SK-N-SH (cell line): ENCODE measurements at regions of chr1 and their contacts with region 1.

Region 1: GRCh38 chr1:21232044-21232443 is 55.3 kb upstream of the EIF4G3 start:
- DNase-seq: peak; percentile 81
- H3K4me3 ChIP-seq: no peak overlapping the region
- H3K27ac ChIP-seq: no peak overlapping the region
- H3K4me1 ChIP-seq: no peaks in the 10 kb centered on the region
- H3K27me3 ChIP-seq: no peaks in the 10 kb centered on the region
- CTCF ChIP-seq: peak; percentile 84
- EP300 ChIP-seq: no peak
- RAD21 ChIP-seq: peak; percentile 93

Region 2: DNA sequence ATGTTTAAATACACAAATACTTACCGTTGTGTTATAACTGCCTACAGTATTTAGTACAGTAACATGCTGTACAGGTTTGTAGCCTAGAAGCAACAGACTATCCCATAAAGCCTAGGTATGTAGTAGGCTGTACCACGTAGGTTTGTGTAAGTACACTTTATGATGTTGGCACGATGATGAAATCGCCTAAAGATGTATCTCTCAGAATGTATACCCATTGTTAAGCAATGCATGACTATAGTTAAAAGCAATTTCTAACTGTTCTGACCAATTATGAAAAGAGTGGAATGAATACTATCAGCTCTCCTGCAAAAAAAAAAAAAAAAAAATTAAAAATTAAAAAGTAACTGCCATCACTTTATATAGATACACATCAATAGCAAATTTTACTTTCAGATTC is 456.3 kb before region 1 on chr1:
- CTCF ChIA-PET with region 1: no interaction called
- POLR2A ChIA-PET with region 1: no interaction called
- DNase-seq: no peak
- H3K4me3 ChIP-seq: no peak overlapping the region
- H3K27ac ChIP-seq: no peak overlapping the region
- H3K4me1 ChIP-seq: peaks cover 0 to 2% of the 10 kb centered on the region in 2 experiments; a peak in 2 of 4 replicates
- H3K27me3 ChIP-seq: no peaks in the 10 kb centered on the region
- CTCF ChIP-seq: no peak
- EP300 ChIP-seq: no peak
- RAD21 ChIP-seq: no peak

Region 3: GRCh38 chr1:21216835-21217811 is 14.9 kb before region 1 on chr1:
- CTCF ChIA-PET with region 1: interaction called, 76 read pairs
- POLR2A ChIA-PET with region 1: no interaction called
- DNase-seq: peak; percentile 67
- H3K4me3 ChIP-seq: no peak overlapping the region; a peak in 1 of 4 replicates
- H3K27ac ChIP-seq: no peak overlapping the region; a peak in 1 of 4 replicates
- H3K4me1 ChIP-seq: peaks cover 0 to 13% of the 10 kb centered on the region in 2 experiments; a peak in 1 of 4 replicates
- H3K27me3 ChIP-seq: no peaks in the 10 kb centered on the region
- CTCF ChIP-seq: peak; percentile 86
- EP300 ChIP-seq: no peak
- RAD21 ChIP-seq: peak; percentile 52

Region 4: DNA sequence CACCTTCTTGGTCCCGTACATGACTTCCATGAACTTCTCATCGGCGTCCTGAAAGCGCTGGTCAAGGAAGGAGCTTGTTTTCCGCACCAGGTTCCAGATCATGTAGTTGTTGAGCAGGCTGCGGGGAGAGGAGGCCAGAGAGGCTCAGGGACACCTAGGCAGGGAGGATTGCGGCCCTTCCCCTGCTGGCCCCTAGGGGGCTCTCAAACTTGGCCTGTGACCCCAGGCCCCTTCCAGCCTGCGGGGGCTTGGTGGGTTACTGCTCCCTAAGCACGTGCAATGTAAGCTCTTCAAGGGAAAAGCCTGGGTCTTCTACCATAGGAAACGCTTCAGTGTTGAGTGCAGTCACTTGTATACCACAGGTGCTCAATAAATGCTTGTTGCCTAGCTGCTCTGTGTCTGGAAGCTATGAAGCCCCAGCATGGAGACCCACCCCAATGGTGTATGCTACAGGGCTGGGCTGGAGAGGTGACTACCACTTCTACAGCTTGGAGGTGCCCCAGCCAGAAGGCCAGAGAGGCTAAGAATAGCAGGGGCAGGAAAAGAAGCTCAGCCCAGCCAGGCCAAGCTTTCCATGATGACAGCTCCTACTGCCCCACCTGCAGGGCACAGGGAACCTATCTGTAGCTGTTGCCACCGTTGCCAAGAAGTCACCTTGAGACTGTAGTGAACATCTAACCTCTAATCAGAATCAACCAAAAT is 13.1 kb after region 1 on chr1:
- CTCF ChIA-PET with region 1: interaction called, 35 read pairs
- POLR2A ChIA-PET with region 1: no interaction called
- DNase-seq: peak; percentile 43
- H3K4me3 ChIP-seq: no peak overlapping the region
- H3K27ac ChIP-seq: no peak overlapping the region
- H3K4me1 ChIP-seq: no peaks in the 10 kb centered on the region
- H3K27me3 ChIP-seq: no peaks in the 10 kb centered on the region
- CTCF ChIP-seq: peak; percentile 57
- EP300 ChIP-seq: no peak
- RAD21 ChIP-seq: no peak

Region 5: GRCh38 chr1:21261551-21262281 is 29.7 kb after region 1 on chr1:
- CTCF ChIA-PET with region 1: interaction called, 73 read pairs
- POLR2A ChIA-PET with region 1: no interaction called
- DNase-seq: peak; percentile 42
- H3K4me3 ChIP-seq: no peak overlapping the region
- H3K27ac ChIP-seq: peak overlapping the region; percentile 86 to 99
- H3K4me1 ChIP-seq: peaks cover 30 to 41% of the 10 kb centered on the region in 2 experiments; a peak in 3 of 4 replicates
- H3K27me3 ChIP-seq: no peaks in the 10 kb centered on the region
- CTCF ChIP-seq: no peak
- EP300 ChIP-seq: peak in 1 of 2 experiments; percentile 58; a peak in 1 of 4 replicates
- RAD21 ChIP-seq: no peak

Region 6: GRCh38 chr1:21284206-21285054 is 52.4 kb after region 1 on chr1:
- CTCF ChIA-PET with region 1: no interaction called
- POLR2A ChIA-PET with region 1: no interaction called
- DNase-seq: peak; percentile 69
- H3K4me3 ChIP-seq: no peak overlapping the region
- H3K27ac ChIP-seq: peak overlapping the region in 1 of 2 experiments; percentile 98; a peak in 2 of 4 replicates
- H3K4me1 ChIP-seq: peaks cover 11 to 48% of the 10 kb centered on the region in 2 experiments; a peak in 2 of 4 replicates
- H3K27me3 ChIP-seq: no peaks in the 10 kb centered on the region
- CTCF ChIP-seq: no peak
- EP300 ChIP-seq: no peak
- RAD21 ChIP-seq: no peak; the same call in 1 of the 2 replicates

Region 7: DNA sequence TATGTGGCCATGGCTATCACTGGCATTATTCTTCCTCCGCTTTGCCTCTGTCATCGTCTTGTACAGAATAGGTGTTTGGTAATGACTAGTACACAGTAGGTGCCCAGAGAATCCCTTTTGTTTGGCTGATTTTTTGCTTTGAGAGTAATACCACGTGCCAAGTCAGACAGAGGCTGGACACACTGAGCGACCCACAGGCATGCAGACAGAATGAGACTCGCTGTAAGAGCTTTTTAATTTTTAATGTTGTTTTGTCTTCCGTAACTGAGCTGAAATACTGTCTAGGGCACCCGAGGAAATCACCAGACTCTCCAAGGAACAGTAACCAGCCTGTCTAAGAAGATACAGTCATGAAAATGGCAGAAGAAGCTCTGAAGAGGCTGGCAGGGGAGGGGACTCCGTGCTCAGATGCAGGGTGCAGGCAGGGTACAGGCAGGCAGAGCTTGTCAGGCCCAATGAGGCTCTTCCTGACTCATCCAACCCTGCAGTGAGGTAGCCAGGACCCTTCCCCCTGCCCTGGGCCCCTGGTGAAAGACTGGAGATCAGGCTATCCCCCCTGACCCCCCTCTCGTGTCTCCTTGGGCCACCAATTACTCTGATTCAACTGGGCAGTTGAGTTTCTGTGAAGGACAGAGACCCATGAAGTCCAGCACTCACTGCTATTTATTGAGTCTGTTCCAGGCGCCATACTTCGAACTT is 118.3 kb after region 1 on chr1:
- CTCF ChIA-PET with region 1: interaction called, 17 read pairs
- POLR2A ChIA-PET with region 1: no interaction called
- DNase-seq: peak; percentile 4
- H3K4me3 ChIP-seq: no peak overlapping the region
- H3K27ac ChIP-seq: no peak overlapping the region
- H3K4me1 ChIP-seq: peaks cover 0 to 5% of the 10 kb centered on the region in 2 experiments; a peak in 1 of 4 replicates
- H3K27me3 ChIP-seq: no peaks in the 10 kb centered on the region; the same call in 1 of the 2 replicates
- CTCF ChIP-seq: no peak
- EP300 ChIP-seq: no peak
- RAD21 ChIP-seq: no peak

Region 8: GRCh38 chr1:21362096-21362495 is 130.1 kb after region 1 on chr1:
- CTCF ChIA-PET with region 1: interaction called, 39 read pairs
- POLR2A ChIA-PET with region 1: no interaction called
- DNase-seq: no peak
- H3K4me3 ChIP-seq: no peak overlapping the region
- H3K27ac ChIP-seq: peak overlapping the region in 1 of 2 experiments; percentile 12; a peak in 1 of 4 replicates
- H3K4me1 ChIP-seq: peaks cover 0 to 7% of the 10 kb centered on the region in 2 experiments; a peak in 1 of 4 replicates
- H3K27me3 ChIP-seq: no peaks in the 10 kb centered on the region
- CTCF ChIP-seq: no peak
- EP300 ChIP-seq: no peak
- RAD21 ChIP-seq: 0 out of 2 replicates have a peak, but pooled peaks have one; percentile 3

Region 9: GRCh38 chr1:21573971-21574465 is 342.0 kb after region 1 on chr1:
- CTCF ChIA-PET with region 1: interaction called, 16 read pairs
- POLR2A ChIA-PET with region 1: no interaction called
- DNase-seq: peak; percentile 85
- H3K4me3 ChIP-seq: no peak overlapping the region
- H3K27ac ChIP-seq: no peak overlapping the region
- H3K4me1 ChIP-seq: peaks cover 0 to 5% of the 10 kb centered on the region in 2 experiments; a peak in 2 of 4 replicates
- H3K27me3 ChIP-seq: no peaks in the 10 kb centered on the region
- CTCF ChIP-seq: peak; percentile 78
- EP300 ChIP-seq: no peak
- RAD21 ChIP-seq: peak; percentile 92